Adrenal gland (tissue), 19 donors: ENCODE measurements at regions of chr5 and their contacts with region 1.

Region 1: GRCh38 chr5:157476702-157477408 is 16.8 kb downstream of the NIPAL4 start:
- DNase-seq: peak; percentile 26 to 74 (median 45)
- H3K4me3 ChIP-seq: no peak overlapping the region
- H3K27ac ChIP-seq: no peak overlapping the region
- H3K4me1 ChIP-seq: no peaks in the 10 kb centered on the region
- H3K27me3 ChIP-seq: no peaks in the 10 kb centered on the region
- CTCF ChIP-seq: peak; percentile 54 to 76 (median 69)
- POLR2A ChIP-seq: no peak

Region 2: DNA sequence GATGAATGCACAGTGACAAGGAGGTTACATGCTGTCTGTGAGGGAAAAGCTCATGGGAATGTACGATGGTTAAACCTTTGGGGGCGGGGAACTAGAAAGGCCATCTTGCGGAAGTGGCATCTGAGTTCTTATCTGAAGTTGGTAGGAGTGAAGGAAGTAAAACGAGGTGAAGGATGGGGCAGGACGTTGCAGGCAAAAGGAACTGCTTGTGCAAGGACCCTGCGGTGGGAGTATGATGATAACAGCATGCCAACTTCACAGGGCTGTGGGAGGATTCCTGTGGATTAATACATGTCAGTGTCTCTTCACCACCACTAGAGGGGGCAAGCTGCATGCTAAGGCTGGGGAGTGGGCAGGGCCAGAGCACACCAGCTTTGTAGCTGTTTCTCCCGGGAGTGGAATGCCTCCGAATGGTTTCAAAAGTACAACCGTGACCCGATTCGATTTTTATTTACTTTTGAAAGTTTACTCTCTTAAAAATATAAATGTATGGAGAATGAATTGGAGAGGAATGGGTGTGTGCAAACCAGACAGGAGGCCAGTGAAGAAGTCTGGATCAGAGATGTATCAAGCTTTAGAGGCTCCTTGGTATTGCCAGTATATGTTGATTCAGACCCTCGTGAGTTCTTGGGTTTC is 148.5 kb before region 1 on chr5:
- intact Hi-C with region 1: loop called in 1 of 2 experiments (anchors 10 kb)
- DNase-seq: peak; percentile 59 to 79 (median 73)
- H3K4me3 ChIP-seq: peak overlapping the region in 1 of 4 donors; percentile 24
- H3K27ac ChIP-seq: no peak overlapping the region
- H3K4me1 ChIP-seq: no peaks in the 10 kb centered on the region
- H3K27me3 ChIP-seq: no peaks in the 10 kb centered on the region
- CTCF ChIP-seq: peak; percentile 80 to 92 (median 90)
- POLR2A ChIP-seq: no peak

Region 3: DNA sequence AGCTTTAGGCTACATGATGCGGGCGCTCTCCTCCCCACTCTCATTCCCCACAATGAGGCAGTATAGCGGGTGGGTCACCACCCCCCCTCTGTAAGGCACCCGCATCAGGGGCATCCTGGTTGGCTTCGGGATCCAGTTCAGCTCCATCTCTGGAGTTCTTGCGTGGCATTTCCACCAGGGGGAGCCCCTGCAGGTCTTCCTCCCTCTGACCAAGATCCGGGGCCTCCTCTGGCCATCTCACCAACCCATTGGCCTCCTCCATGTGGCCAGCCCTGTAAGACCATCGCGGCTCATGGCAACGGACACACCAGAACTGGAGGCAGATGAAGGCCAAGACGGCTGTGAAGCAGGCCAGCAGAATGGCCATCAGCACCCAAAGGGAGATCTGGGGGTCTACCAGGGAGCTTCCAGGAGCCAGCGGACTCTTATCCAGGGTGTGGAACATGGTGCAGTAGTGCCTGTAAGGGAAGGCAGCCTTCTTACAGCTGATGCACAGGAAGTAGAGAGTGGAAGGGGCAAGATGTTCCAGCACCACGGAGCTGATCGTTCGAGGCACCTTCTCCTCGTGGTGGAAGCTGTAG is 133.9 kb before region 1 on chr5:
- intact Hi-C with region 1: loop called in 1 of 2 experiments (anchors 5 kb)
- DNase-seq: peak; percentile 25 to 62 (median 42)
- H3K4me3 ChIP-seq: no peak overlapping the region
- H3K27ac ChIP-seq: peak overlapping the region in 1 of 5 donors; percentile 63
- H3K4me1 ChIP-seq: no peaks in the 10 kb centered on the region
- H3K27me3 ChIP-seq: no peaks in the 10 kb centered on the region
- CTCF ChIP-seq: peak; percentile 19 to 55 (median 49)
- POLR2A ChIP-seq: no peak

Region 4: GRCh38 chr5:157548513-157549297 is 71.8 kb after region 1 on chr5:
- intact Hi-C with region 1: no loop called
- DNase-seq: peak in 3 of 7 donors; percentile 45 to 61 (median 60)
- H3K4me3 ChIP-seq: no peak overlapping the region
- H3K27ac ChIP-seq: peak overlapping the region in 2 of 5 donors; percentile 63 to 74
- H3K4me1 ChIP-seq: peaks cover 11 to 17% of the 10 kb centered on the region in 2 donors
- H3K27me3 ChIP-seq: no peaks in the 10 kb centered on the region
- CTCF ChIP-seq: no peak
- POLR2A ChIP-seq: no peak

Region 5: GRCh38 chr5:158301166-158301565 is 824.3 kb after region 1 on chr5:
- intact Hi-C with region 1: no loop called
- DNase-seq: no peak
- H3K4me3 ChIP-seq: no peak overlapping the region
- H3K27ac ChIP-seq: no peak overlapping the region
- H3K4me1 ChIP-seq: no peaks in the 10 kb centered on the region
- H3K27me3 ChIP-seq: peaks cover 3% of the 10 kb centered on the region
- CTCF ChIP-seq: no peak
- POLR2A ChIP-seq: no peak